Endothelial cell of umbilical vein (primary cell): ENCODE measurements at regions of chr5 and their contacts with region 1.

Region 1: GRCh38 chr5:134637161-134637582 is 4.5 kb upstream of the SAR1B start:
- DNase-seq: no peak
- H3K4me3 ChIP-seq: no peak overlapping the region
- H3K27ac ChIP-seq: no peak overlapping the region
- H3K4me1 ChIP-seq: no peaks in the 10 kb centered on the region
- H3K27me3 ChIP-seq: no peaks in the 10 kb centered on the region
- CTCF ChIP-seq: no peak
- POLR2A ChIP-seq: no peak

Region 2: GRCh38 chr5:134648425-134649162 is 11.4 kb after region 1 on chr5 and contains the start of gene SEC24A:
- CTCF ChIA-PET with region 1: interaction called, 5 read pairs
- POLR2A ChIA-PET with region 1: interaction called, 3 read pairs
- dilution Hi-C with region 1: no loop called
- intact Hi-C with region 1: loop called (anchors 1 kb)
- DNase-seq: peak; percentile 93
- H3K4me3 ChIP-seq: peak within 1 kb of the TSS; percentile 60 to 91 (median 73)
- H3K27ac ChIP-seq: peak within 1 kb of the TSS; percentile 94
- H3K4me1 ChIP-seq: peaks cover 9% of the 10 kb centered on the region
- H3K27me3 ChIP-seq: no peaks in the 10 kb centered on the region
- CTCF ChIP-seq: no peak
- POLR2A ChIP-seq: peak; percentile 91
- total RNA-seq, gene SEC24A: 28.6 and 30.0 TPM in 2 replicates